ENCODE measurements at regions of chr16 and their contacts with region 1.

Region 1: DNA sequence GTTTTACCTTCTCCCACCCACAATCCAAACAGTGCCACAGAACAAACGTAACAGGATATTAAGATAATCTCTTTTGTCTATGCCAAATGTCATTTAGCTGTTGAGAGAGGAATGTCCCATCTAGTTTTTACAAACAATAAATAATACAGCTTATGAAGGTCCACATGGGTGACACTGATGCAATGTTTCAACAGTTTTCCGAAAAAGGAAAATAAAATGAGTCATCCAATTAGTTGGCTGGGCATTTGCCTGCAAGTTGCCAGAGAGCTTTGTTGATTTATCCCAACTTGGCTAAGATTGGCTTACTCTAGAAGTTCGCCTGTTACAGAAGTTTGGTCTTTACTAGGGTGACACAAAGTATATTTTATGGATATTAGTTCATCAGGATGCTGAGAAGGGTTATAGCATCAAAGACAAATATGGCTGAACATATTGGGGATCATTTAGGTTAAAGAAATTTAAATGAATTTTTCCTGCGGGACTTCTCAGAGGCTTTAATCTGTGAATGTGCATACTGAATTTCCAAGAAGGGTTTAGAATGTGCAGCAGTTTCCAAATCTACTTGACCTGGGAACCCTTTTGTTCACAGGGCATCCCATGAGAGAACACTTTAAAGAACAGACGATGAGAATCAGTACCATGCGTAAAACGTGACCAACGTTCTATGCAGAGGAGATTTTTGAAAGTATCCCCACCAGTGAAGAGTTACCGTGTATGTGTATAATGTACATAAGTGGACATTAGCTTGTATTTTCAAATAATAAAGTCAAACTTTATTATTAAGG is 73.1 kb downstream of the CDH13 start:
- DNase-seq: peak in 1 of 2 donors; percentile 52
- ATAC-seq: peak; percentile 86
- H3K4me3 ChIP-seq: no peak overlapping the region
- H3K27ac ChIP-seq: peak overlapping the region in 1 of 2 donors; percentile 73
- H3K4me1 ChIP-seq: peaks cover 9 to 10% of the 10 kb centered on the region in 2 donors
- H3K27me3 ChIP-seq: no peaks in the 10 kb centered on the region

Region 2: GRCh38 chr16:82626791-82627261 is 73.1 kb before region 1 on chr16 and contains the start of gene CDH13:
- intact Hi-C with region 1: loop called (anchors 5 kb)
- DNase-seq: peak; percentile 66 to 83
- ATAC-seq: peak; percentile 39
- H3K4me3 ChIP-seq: peak within 1 kb of the TSS; percentile 86
- H3K27ac ChIP-seq: peak within 1 kb of the TSS; percentile 15 to 45
- H3K4me1 ChIP-seq: peaks cover 4 to 5% of the 10 kb centered on the region in 2 donors
- H3K27me3 ChIP-seq: no peaks in the 10 kb centered on the region
- total RNA-seq, gene CDH13: 159 to 265 TPM

Region 3: DNA sequence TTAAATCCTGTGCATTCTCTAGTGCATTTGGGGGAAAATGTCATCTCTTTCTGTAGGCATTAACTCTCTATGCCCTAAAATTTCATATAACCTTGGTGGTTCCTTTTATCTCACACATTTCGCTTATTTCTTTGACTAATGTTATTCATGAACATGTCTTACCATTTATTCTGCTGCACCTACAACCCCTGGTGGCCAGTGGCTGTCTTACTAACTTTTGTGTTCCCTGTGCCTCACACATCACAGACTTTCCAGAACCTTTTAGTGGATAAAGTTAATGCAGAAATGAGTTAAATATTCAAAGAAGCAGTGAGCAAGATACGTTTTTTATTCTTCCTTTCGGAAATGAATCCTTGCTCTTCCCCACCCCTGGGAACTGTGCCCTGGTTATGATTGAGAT is 38.8 kb after region 1 on chr16:
- intact Hi-C with region 1: loop called in 1 of 2 experiments (anchors 5 kb)
- DNase-seq: no peak
- ATAC-seq: no peak
- H3K4me3 ChIP-seq: no peak overlapping the region
- H3K27ac ChIP-seq: no peak overlapping the region
- H3K4me1 ChIP-seq: peaks cover 0 to 14% of the 10 kb centered on the region in 2 donors
- H3K27me3 ChIP-seq: no peaks in the 10 kb centered on the region

Region 4: DNA sequence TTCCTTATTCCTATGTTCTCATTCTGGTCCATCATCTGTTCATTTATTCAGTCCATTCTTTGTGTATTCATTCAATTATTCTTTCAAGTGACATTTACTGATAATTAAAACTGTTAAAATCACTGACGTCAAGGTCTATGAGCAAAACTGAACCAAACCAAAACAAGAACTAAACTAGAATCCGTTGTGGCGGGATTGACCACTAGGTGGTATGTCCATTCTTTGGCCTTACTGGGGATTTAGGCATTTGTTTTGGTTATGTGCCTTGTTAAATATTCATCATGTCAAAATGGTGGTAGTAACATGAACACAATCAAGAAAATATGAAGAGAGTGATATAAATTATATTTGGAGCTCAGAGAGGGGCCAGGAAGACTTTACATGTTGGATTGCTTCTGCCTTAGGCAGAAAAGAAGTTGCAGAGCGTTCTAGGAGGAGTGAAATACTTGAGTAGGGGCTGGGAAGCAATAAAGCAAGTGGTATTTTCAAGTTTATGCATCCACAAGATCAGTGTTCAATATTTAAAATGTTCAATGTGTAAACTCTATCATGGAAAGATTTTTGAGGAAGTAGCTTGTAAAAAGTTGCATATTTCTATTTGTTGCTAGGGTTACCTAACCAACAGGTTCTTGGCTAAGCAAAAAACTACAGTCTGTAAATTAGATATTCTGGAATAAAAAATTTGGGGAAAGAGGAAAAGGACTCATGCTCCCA is 55.8 kb after region 1 on chr16:
- intact Hi-C with region 1: loop called (anchors 5 kb)
- DNase-seq: no peak
- ATAC-seq: no peak
- H3K4me3 ChIP-seq: no peak overlapping the region
- H3K27ac ChIP-seq: peak overlapping the region in 1 of 2 donors; percentile 24
- H3K4me1 ChIP-seq: peaks cover 7 to 11% of the 10 kb centered on the region in 2 donors
- H3K27me3 ChIP-seq: no peaks in the 10 kb centered on the region

Region 5: GRCh38 chr16:82769845-82770244 is 69.9 kb after region 1 on chr16:
- intact Hi-C with region 1: no loop called
- DNase-seq: peak in 1 of 2 donors; percentile 53
- ATAC-seq: no peak
- H3K4me3 ChIP-seq: no peak overlapping the region
- H3K27ac ChIP-seq: no peak overlapping the region
- H3K4me1 ChIP-seq: peaks cover 0 to 4% of the 10 kb centered on the region in 2 donors
- H3K27me3 ChIP-seq: no peaks in the 10 kb centered on the region

Region 6: DNA sequence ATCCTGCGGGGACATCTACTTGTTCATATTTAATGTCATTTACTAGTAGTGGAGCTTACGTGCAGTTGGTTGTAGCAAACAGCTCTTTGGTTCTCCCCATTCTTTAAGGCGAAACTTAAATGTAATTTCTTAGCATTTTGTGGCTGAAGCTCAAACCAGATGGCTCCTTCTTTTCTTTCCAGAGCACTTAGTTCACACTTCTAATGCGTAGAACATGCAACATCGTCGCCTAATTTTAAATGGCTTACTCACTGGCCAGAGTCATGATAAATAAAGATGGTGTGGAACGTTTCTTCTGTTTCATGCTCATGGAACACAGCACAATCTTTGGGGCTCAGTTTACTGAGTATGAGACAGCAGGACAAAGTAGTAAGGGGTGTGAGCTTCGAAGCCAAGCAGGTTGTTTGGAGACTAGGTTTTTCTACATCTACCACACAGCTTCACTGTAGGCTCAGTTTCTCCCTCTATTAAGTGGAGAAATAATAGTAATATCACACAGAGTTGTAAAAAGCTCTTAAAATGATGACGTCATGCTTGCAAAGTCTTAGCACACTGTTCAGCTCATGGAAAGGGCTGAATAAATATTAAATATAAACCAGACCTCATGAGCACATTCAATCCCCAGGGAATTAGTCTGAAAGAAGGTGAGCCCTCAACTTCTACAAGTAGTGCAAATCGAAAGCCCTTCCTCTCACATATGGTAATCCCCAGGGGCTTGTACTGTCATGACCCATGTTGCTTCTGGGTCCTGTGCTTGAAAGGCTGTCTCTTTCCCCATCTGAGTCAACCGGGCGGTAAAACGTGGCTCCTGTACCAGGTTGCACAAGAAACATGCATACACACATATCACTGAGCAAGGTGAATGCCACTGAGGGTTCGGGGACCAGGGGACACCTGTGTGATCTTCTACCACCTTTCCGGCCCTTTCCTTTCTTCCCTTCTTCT is 311.1 kb after region 1 on chr16:
- intact Hi-C with region 1: loop called in 1 of 2 experiments (anchors 5 kb)
- DNase-seq: no peak
- ATAC-seq: no peak
- H3K4me3 ChIP-seq: no peak overlapping the region
- H3K27ac ChIP-seq: peak overlapping the region; percentile 93 to 97
- H3K4me1 ChIP-seq: peaks cover 4 to 8% of the 10 kb centered on the region in 2 donors
- H3K27me3 ChIP-seq: no peaks in the 10 kb centered on the region

Measured in aorta (tissue), 5 donors.